HepG2 (cell line): ENCODE measurements at regions of chr4 and their contacts with region 1.

Region 1: DNA sequence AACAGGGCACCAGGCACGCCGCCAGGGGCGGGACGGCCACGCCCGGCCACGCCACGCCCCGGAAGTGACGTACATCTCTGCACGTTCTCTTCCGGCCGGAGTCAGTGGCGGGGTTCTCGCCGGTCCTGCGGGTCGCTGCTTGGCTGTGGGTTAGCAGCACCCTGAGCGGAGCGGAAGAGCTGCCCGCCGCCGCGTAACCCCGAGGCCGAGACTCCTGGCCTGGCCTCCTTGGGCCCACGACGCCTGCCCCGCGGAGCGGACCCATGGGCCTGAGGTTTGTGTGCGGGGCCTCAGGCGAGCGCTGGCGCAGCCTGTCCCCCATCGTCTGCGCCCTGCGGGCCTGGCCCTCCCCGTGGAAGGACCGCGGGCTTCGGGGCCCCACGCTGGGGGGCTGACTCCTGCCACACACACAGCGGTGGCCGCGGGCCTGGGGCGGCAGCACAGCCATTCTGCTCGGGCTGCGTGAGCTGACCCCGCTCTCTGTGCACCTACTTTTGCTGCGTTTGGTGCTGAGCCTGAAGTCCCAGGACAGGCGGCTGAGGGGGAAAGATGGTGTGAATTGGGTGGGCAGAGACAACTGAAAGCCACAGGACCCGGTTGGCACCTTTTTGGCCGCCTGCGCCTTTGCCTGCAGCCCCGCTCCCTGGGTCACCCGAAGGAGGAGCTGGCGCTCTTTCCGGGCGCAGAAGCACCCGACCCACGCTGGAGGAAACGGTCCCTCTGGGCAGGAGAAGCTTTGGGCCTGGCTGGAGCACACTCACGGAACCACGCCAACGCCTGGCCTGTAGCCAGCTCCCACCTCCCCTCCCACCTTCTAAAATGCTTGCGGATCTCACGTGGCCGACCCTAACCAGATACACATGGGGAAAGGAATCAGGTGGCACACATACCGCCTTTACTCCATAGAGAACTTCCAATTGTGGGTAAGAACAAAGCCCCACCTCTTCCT is 28.1 kb downstream of the NOP14 start:
- DNase-seq: peak; percentile 69
- ATAC-seq: peak; percentile 62
- H3K4me3 ChIP-seq: peak overlapping the region; percentile 97 to 98 (median 98)
- H3K27ac ChIP-seq: peak overlapping the region; percentile 67
- H3K4me1 ChIP-seq: peaks cover 43% of the 10 kb centered on the region
- H3K27me3 ChIP-seq: no peaks in the 10 kb centered on the region; a peak in 1 of 5 replicates
- CTCF ChIP-seq: peak; percentile 17; the same call in 1 of the 2 replicates
- EP300 ChIP-seq: no peak
- POLR2A ChIP-seq: peak in 1 of 2 experiments; percentile 79; a peak in 2 of 4 replicates
- RAD21 ChIP-seq: no peak

Region 2: GRCh38 chr4:2598511-2599303 is 336.4 kb before region 1 on chr4:
- CTCF ChIA-PET with region 1: no interaction called
- POLR2A ChIA-PET with region 1: no interaction called
- in situ Hi-C with region 1: no loop called
- intact Hi-C with region 1: no loop called
- DNase-seq: no peak
- ATAC-seq: peak; percentile 61
- H3K4me3 ChIP-seq: no peak overlapping the region
- H3K27ac ChIP-seq: no peak overlapping the region
- H3K4me1 ChIP-seq: peaks cover 68% of the 10 kb centered on the region
- H3K27me3 ChIP-seq: no peaks in the 10 kb centered on the region
- CTCF ChIP-seq: peak; percentile 24; the same call in 1 of the 2 replicates
- EP300 ChIP-seq: no peak
- POLR2A ChIP-seq: no peak
- RAD21 ChIP-seq: no peak

Region 3: GRCh38 chr4:2843263-2843940 is 91.7 kb before region 1 on chr4 and contains the start of gene ADD1:
- CTCF ChIA-PET with region 1: no interaction called
- POLR2A ChIA-PET with region 1: no interaction called
- in situ Hi-C with region 1: no loop called
- intact Hi-C with region 1: loop called (anchors 5 kb)
- DNase-seq: peak; percentile 81
- ATAC-seq: peak; percentile 95
- H3K4me3 ChIP-seq: peak within 1 kb of the TSS; percentile 86 to 99 (median 87)
- H3K27ac ChIP-seq: peak within 1 kb of the TSS; percentile 72
- H3K4me1 ChIP-seq: peaks cover 46% of the 10 kb centered on the region
- H3K27me3 ChIP-seq: no peaks in the 10 kb centered on the region; a peak in 1 of 5 replicates
- CTCF ChIP-seq: no peak
- EP300 ChIP-seq: 0 out of 4 replicates have a peak, but pooled peaks of 1 of the 2 experiments have one; percentile 23
- POLR2A ChIP-seq: peak; percentile 76 to 86
- RAD21 ChIP-seq: peak; percentile 49
- total RNA-seq, gene ADD1: 122 and 133 TPM in 2 replicates

Region 4: DNA sequence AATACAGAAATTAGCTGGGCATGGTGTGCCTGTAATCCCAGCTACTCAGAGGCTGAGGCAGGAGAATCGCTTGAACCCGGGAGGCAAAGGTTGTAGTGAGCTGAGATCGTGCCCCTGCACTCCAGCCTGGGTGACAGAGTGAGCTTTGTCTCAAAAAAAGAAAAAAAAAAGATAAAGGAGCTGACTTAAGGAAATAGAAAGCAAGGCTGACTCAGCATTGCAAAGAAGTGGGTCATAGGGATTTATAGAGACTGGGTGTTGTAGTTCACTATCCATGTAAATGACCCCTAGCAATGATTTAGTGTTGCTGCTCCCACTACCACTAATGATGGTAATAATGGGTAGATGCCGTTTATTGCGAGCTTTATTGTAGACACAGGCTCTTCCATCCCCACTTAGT is 43.8 kb before region 1 on chr4:
- CTCF ChIA-PET with region 1: no interaction called
- POLR2A ChIA-PET with region 1: no interaction called
- in situ Hi-C with region 1: no loop called
- intact Hi-C with region 1: no loop called
- DNase-seq: no peak
- ATAC-seq: no peak
- H3K4me3 ChIP-seq: no peak overlapping the region
- H3K27ac ChIP-seq: no peak overlapping the region
- H3K4me1 ChIP-seq: no peaks in the 10 kb centered on the region
- H3K27me3 ChIP-seq: no peaks in the 10 kb centered on the region
- CTCF ChIP-seq: no peak
- EP300 ChIP-seq: no peak
- POLR2A ChIP-seq: no peak
- RAD21 ChIP-seq: no peak